ENCODE measurements at regions of chr21 and their contacts with region 1.

Region 1: DNA sequence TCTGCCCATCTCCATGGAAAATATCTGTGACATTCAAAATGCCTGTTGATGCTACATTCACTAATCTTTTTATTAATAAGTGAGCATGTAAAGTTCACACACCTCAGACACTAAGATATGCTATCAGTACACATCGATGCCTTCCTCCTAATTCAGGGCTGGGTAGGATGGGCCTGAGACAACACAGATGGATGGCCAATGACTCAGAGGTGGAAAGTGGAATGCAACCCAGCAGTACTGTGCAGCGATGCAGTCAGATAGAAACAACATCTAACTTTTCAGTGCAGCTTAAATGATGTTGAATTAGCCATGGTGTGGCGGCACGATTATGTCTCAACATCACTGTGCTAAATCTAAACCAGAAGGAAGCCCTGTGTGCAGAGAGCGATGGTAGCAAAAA is 161.6 kb upstream of the KCNJ15 start:
- DNase-seq: peak in 1 of 4 experiments; percentile 38
- ATAC-seq: peak; percentile 74
- H3K4me3 ChIP-seq: no peak overlapping the region
- H3K27ac ChIP-seq: no peak overlapping the region
- H3K4me1 ChIP-seq: peaks cover 6 to 27% of the 10 kb centered on the region in 2 experiments; a peak in 4 of 5 replicates
- H3K27me3 ChIP-seq: no peaks in the 10 kb centered on the region
- CTCF ChIP-seq: no peak
- EP300 ChIP-seq: no peak
- POLR2A ChIP-seq: no peak
- RAD21 ChIP-seq: no peak

Region 2: GRCh38 chr21:37936010-37936785 is 159.0 kb before region 1 on chr21:
- CTCF ChIA-PET with region 1: no interaction called
- POLR2A ChIA-PET with region 1: no interaction called
- in situ Hi-C with region 1: no loop called
- intact Hi-C with region 1: no loop called
- DNase-seq: no peak
- ATAC-seq: no peak
- H3K4me3 ChIP-seq: no peak overlapping the region
- H3K27ac ChIP-seq: no peak overlapping the region
- H3K4me1 ChIP-seq: no peaks in the 10 kb centered on the region
- H3K27me3 ChIP-seq: no peaks in the 10 kb centered on the region
- CTCF ChIP-seq: no peak
- EP300 ChIP-seq: no peak
- POLR2A ChIP-seq: no peak
- RAD21 ChIP-seq: no peak

Region 3: DNA sequence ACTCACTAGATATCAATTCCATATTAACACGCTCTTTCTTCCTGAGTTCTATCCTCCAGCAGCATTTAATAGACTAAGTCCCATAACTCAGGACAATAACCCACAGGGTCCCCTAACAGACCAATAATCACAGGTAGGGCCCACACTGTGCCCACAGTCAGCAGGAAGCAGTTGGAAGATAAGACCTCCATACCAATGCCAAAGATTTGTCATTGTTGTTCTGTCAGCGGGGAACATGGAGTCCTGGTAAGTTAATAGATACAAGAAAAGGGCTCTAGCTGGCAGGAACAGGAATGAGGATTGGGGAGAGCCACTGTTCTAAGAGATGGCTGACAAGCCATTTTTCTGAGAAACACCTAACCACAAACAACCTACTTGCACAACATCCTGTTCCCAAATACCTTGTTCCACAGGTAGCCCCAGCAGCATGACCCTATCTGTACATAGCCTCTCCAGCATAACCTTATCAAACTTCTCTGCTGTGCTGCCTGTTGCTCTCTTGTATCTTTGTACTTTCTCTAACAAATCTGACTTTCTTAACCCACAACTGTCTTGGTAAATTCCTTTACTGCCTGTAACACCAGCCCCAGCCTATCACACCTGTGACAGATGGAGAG is 19.6 kb after region 1 on chr21:
- CTCF ChIA-PET with region 1: no interaction called
- POLR2A ChIA-PET with region 1: interaction called, 11 read pairs
- in situ Hi-C with region 1: no loop called
- intact Hi-C with region 1: no loop called
- DNase-seq: peak in 2 of 4 experiments; percentile 24 to 53
- ATAC-seq: peak; percentile 4; the same call in 2 of the 3 replicates
- H3K4me3 ChIP-seq: no peak overlapping the region
- H3K27ac ChIP-seq: peak overlapping the region; percentile 76
- H3K4me1 ChIP-seq: peaks cover 10 to 56% of the 10 kb centered on the region in 2 experiments
- H3K27me3 ChIP-seq: no peaks in the 10 kb centered on the region
- CTCF ChIP-seq: no peak
- EP300 ChIP-seq: peak; percentile 9; the same call in 1 of the 2 replicates
- POLR2A ChIP-seq: no peak
- RAD21 ChIP-seq: no peak

Measured in K562 (cell line).